H1 (cell line): ENCODE measurements at regions of chr1 and their contacts with region 1.

Region 1: DNA sequence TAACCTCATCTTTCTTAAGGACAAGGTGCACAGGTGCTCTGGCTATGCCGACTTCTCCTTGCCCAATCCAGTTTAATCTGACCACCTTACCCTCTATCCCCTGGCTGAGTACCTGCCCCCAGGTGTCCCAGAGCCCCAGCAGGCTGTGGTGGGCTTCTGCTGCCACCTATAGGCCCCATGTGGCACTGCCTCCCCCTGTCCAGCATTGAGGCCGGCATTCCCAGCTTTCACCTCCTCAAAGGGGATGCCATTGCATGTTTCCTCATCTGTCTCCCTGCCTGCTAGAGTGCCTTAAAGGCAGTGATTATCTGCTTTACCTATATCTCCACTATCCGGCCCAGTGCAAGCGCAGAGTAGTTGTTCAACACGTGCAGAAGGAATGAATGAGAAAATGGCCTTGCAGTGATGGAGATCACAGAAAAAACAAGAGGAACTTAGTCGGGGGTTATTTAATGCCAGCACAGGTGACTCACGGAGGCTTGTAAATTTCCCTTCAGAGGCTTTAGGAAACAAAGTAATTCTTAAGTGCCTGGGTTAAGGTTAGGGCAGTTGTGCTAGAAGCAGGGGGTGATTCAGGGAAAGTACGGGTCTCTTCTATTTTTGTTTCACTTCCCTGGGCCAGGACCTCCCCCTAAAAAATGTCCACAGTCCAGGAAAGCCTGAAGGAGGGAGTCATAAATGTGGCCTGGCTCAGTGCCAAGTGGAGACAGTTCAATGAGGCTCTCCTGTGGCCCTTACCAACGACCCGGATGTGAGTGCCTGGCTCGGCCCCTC is 131.8 kb upstream of the NGF start:
- DNase-seq: peak; percentile 50 to 90
- H3K4me3 ChIP-seq: no peak overlapping the region
- H3K27ac ChIP-seq: no peak overlapping the region
- H3K4me1 ChIP-seq: no peaks in the 10 kb centered on the region
- H3K27me3 ChIP-seq: no peaks in the 10 kb centered on the region
- CTCF ChIP-seq: peak; percentile 96 to 100 (median 98)
- EP300 ChIP-seq: no peak
- POLR2A ChIP-seq: no peak
- RAD21 ChIP-seq: peak; percentile 99

Region 2: DNA sequence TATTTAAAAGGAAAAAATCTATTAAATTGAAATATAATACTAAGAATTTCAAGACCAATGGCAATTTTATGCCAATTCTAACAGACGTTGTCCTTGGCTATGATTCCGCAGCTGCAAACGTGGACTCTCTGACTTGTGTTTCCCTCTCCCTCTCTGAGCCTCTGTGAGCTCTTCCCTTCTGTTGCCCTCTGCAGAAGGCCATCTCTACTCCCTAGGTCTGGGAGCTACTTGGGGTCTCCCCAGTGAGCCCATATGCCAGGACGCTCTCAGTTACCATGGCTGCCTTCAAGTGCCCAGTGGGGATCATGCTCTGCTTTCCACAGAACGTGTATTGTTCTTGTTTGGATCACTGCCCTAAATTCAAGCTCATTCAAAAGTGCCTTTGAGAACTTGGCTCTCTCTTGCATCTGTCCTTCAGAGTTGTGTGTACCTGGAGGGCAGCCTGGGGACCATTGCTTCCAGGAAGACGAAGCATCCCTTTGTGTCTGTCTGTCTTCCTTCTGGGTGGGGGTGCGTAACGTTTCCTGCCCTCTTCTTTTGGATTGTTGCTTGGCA is 283.1 kb before region 1 on chr1:
- CTCF ChIA-PET with region 1: interaction called, 13 read pairs
- POLR2A ChIA-PET with region 1: no interaction called
- DNase-seq: no peak
- H3K4me3 ChIP-seq: no peak overlapping the region
- H3K27ac ChIP-seq: no peak overlapping the region
- H3K4me1 ChIP-seq: no peaks in the 10 kb centered on the region
- H3K27me3 ChIP-seq: no peaks in the 10 kb centered on the region
- CTCF ChIP-seq: no peak
- EP300 ChIP-seq: no peak
- POLR2A ChIP-seq: no peak
- RAD21 ChIP-seq: no peak

Region 3: DNA sequence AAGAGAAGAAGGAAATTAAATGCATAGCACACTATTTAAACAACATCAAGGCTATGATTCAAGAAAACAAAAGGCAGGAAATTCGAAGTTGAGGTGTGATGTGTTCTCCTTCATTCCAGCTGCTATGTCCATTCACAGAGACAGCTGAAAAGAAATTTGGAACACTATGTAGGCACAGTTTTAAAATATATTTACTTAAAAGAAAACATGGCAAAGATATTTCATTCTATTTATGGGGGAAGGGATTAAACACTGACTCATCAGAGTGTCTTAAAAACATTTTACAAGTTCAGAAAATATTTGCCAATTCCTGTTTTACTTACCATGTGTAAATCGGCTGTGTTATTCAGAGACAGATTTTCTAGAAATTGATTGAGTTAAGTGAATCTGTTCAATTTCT is 92.5 kb before region 1 on chr1:
- CTCF ChIA-PET with region 1: no interaction called
- POLR2A ChIA-PET with region 1: no interaction called
- DNase-seq: no peak
- H3K4me3 ChIP-seq: no peak overlapping the region
- H3K27ac ChIP-seq: no peak overlapping the region
- H3K4me1 ChIP-seq: no peaks in the 10 kb centered on the region
- H3K27me3 ChIP-seq: no peaks in the 10 kb centered on the region
- CTCF ChIP-seq: no peak
- EP300 ChIP-seq: no peak
- POLR2A ChIP-seq: no peak
- RAD21 ChIP-seq: no peak

Region 4: DNA sequence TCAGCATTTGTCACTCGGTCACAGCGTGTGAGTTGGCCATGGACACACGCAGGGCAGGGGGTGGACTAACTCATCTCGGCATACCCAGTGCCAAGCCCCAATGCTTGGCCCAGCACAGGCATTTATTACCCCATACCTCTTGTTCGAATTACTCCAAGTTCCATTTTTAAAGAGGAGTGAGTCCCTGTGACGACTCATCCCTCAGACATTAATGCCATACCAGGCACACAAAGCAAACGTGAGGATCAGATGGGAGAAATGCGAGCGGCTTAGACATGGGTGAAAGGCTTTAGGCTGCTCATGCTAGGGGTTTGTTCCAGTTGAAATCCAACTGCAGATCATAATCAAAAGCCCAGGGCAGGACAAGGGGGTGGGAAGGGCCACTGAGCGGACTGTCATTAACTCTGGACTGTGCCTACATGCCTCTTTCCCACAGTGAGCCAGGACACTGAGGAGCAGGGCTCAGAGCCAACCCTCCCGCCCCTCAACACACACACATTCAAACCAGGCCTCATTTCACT is 13.4 kb before region 1 on chr1:
- CTCF ChIA-PET with region 1: interaction called, 18 read pairs
- POLR2A ChIA-PET with region 1: no interaction called
- DNase-seq: no peak
- H3K4me3 ChIP-seq: no peak overlapping the region
- H3K27ac ChIP-seq: no peak overlapping the region
- H3K4me1 ChIP-seq: no peaks in the 10 kb centered on the region
- H3K27me3 ChIP-seq: no peaks in the 10 kb centered on the region
- CTCF ChIP-seq: no peak
- EP300 ChIP-seq: no peak
- POLR2A ChIP-seq: no peak
- RAD21 ChIP-seq: no peak

Region 5: DNA sequence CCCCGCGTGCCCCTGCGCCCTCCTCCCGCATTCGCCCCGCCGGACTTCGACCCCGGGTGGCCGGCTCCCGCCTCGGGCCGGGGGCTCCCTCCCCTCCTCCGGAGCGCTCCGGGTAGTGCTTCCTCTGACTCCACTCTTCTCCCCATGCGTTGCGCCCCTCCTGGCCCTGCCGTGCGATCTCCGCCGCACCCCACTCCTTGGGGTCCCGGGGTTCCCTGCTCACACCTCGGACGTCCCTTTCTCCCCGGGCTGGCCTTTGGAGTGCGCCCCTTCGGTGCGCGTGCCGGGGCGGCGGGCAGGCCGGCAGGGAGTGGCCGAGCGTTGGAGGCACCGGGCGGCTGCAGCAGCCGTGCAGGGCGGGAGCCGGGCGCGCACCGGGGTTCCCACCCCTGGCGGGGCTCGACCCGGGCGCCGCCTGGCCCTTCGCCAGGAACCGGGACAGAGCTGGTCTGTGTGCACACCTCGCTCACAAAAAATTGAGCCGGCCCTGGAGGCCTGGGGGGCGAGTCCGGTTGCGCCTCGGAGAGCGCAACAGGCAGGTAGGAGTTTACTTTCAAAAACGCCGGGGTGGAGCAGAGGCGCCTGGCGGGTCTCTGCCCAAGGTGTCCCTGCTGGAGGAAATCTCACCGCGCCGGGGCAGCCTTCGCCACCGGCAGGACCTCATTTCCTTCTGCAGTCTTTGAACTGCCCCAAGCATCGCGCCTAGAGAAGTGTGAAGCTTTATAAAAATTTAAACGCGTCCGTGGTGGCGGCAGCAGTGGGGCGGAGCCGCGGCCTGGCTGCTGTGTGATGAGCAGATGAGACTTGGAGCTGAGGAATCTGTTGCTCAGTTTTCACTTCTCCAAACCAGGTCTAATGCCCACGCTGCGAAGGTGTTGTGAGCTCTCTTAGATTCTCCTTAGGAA is 172.5 kb after region 1 on chr1:
- CTCF ChIA-PET with region 1: no interaction called
- POLR2A ChIA-PET with region 1: no interaction called
- DNase-seq: peak in 1 of 2 experiments; percentile 69
- H3K4me3 ChIP-seq: peak overlapping the region; percentile 67 to 98 (median 72)
- H3K27ac ChIP-seq: peak overlapping the region; percentile 19; the same call in 1 of the 2 replicates
- H3K4me1 ChIP-seq: peaks cover 0 to 10% (median 5%) of the 10 kb centered on the region in 4 experiments; a peak in 4 of 7 replicates
- H3K27me3 ChIP-seq: no peaks in the 10 kb centered on the region; a peak in 2 of 7 replicates
- CTCF ChIP-seq: no peak
- EP300 ChIP-seq: no peak
- POLR2A ChIP-seq: no peak
- RAD21 ChIP-seq: peak in 1 of 2 experiments; percentile 9; a peak in 2 of 4 replicates